PC-3 (cell line): ENCODE measurements at regions of chr10 and their contacts with region 1.

Region 1: GRCh38 chr10:89426230-89426868 is 12.0 kb downstream of the IFIT5 start:
- DNase-seq: peak; percentile 74
- ATAC-seq: peak; percentile 70
- H3K4me3 ChIP-seq: no peak overlapping the region
- H3K27ac ChIP-seq: no peak overlapping the region
- H3K4me1 ChIP-seq: peaks cover 26% of the 10 kb centered on the region
- H3K27me3 ChIP-seq: no peaks in the 10 kb centered on the region
- CTCF ChIP-seq: peak; percentile 78

Region 2: GRCh38 chr10:89398003-89398749 is 28.2 kb before region 1 on chr10:
- CTCF ChIA-PET with region 1: no interaction called
- POLR2A ChIA-PET with region 1: no interaction called
- intact Hi-C with region 1: no loop called
- DNase-seq: no peak
- ATAC-seq: no peak
- H3K4me3 ChIP-seq: no peak overlapping the region
- H3K27ac ChIP-seq: no peak overlapping the region
- H3K4me1 ChIP-seq: peaks cover 6% of the 10 kb centered on the region
- H3K27me3 ChIP-seq: no peaks in the 10 kb centered on the region
- CTCF ChIP-seq: no peak

Region 3: GRCh38 chr10:89466599-89467035 is 40.3 kb after region 1 on chr10:
- CTCF ChIA-PET with region 1: no interaction called
- POLR2A ChIA-PET with region 1: no interaction called
- intact Hi-C with region 1: loop called (anchors 2 kb)
- DNase-seq: peak; percentile 93
- ATAC-seq: peak; percentile 94
- H3K4me3 ChIP-seq: no peak overlapping the region; the same call in 1 of the 2 replicates
- H3K27ac ChIP-seq: 0 out of 2 replicates have a peak overlapping the region, but pooled peaks have one; percentile 16
- H3K4me1 ChIP-seq: peaks cover 32% of the 10 kb centered on the region
- H3K27me3 ChIP-seq: no peaks in the 10 kb centered on the region
- CTCF ChIP-seq: peak; percentile 72

Region 4: GRCh38 chr10:89553064-89553734 is 126.8 kb after region 1 on chr10:
- CTCF ChIA-PET with region 1: no interaction called
- POLR2A ChIA-PET with region 1: no interaction called
- intact Hi-C with region 1: loop called (anchors 2 kb)
- DNase-seq: peak; percentile 92
- ATAC-seq: peak; percentile 69
- H3K4me3 ChIP-seq: no peak overlapping the region
- H3K27ac ChIP-seq: peak overlapping the region; percentile 85
- H3K4me1 ChIP-seq: peaks cover 48% of the 10 kb centered on the region
- H3K27me3 ChIP-seq: no peaks in the 10 kb centered on the region
- CTCF ChIP-seq: no peak

Region 5: DNA sequence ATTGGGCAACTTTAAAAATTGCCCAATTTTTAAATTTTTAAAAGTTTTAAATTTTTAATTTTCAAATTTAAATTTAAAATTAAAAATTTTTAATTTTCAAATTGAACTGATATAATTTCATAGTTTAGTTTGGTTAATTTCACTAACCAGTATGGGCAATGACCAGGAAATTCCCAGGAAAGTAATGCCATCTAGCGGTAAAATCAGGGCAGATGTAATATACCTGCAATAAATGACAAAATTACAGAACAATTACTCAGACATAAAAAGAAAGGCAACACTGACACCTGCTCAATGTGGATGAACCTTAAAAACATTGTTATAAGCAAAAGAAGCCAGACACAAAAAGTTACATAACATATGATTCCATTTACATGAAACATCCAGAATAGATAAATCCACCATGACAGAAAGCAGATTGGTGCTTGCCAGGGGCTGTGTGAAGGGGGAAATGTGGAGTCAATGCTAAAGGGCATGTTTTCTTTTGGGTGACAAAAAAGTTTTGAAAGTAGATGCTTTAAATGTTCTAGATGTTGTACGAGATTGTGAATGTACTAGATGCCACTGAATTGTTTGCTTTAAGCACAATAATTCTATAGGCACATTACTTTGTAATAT is 137.6 kb after region 1 on chr10:
- CTCF ChIA-PET with region 1: interaction called, 3 read pairs
- POLR2A ChIA-PET with region 1: no interaction called
- intact Hi-C with region 1: loop called (anchors 1 kb)
- DNase-seq: peak; percentile 73
- ATAC-seq: peak; percentile 74; the same call in 1 of the 2 replicates
- H3K4me3 ChIP-seq: no peak overlapping the region
- H3K27ac ChIP-seq: no peak overlapping the region
- H3K4me1 ChIP-seq: no peaks in the 10 kb centered on the region
- H3K27me3 ChIP-seq: no peaks in the 10 kb centered on the region
- CTCF ChIP-seq: peak; percentile 68

Region 6: GRCh38 chr10:89643431-89644331 is 217.3 kb after region 1 on chr10:
- CTCF ChIA-PET with region 1: no interaction called
- POLR2A ChIA-PET with region 1: no interaction called
- intact Hi-C with region 1: loop called (anchors 1 kb)
- DNase-seq: peak; percentile 94
- ATAC-seq: peak; percentile 77
- H3K4me3 ChIP-seq: peak overlapping the region; percentile 70
- H3K27ac ChIP-seq: peak overlapping the region; percentile 15; the same call in 1 of the 2 replicates
- H3K4me1 ChIP-seq: peaks cover 21% of the 10 kb centered on the region
- H3K27me3 ChIP-seq: no peaks in the 10 kb centered on the region
- CTCF ChIP-seq: no peak

Region 7: GRCh38 chr10:89701238-89702120 is 275.1 kb after region 1 on chr10 and contains the start of gene KIF20B:
- CTCF ChIA-PET with region 1: interaction called, 4 read pairs
- POLR2A ChIA-PET with region 1: no interaction called
- intact Hi-C with region 1: loop called (anchors 5 kb)
- DNase-seq: peak; percentile 94
- ATAC-seq: peak; percentile 98
- H3K4me3 ChIP-seq: peak within 1 kb of the TSS; percentile 82
- H3K27ac ChIP-seq: peak within 1 kb of the TSS; percentile 38
- H3K4me1 ChIP-seq: peaks cover 19% of the 10 kb centered on the region
- H3K27me3 ChIP-seq: no peaks in the 10 kb centered on the region
- CTCF ChIP-seq: 0 out of 2 replicates have a peak, but pooled peaks have one; percentile 20
- total RNA-seq, gene KIF20B: 10.8 and 12.6 TPM in 2 replicates